H1 (cell line): ENCODE measurements at regions of chr16 and their contacts with region 1.

Region 1: GRCh38 chr16:4586291-4586690 is 28.4 kb downstream of the UBALD1 start:
- DNase-seq: no peak
- H3K4me3 ChIP-seq: no peak overlapping the region
- H3K27ac ChIP-seq: no peak overlapping the region
- H3K4me1 ChIP-seq: no peaks in the 10 kb centered on the region; a peak in 1 of 7 replicates
- H3K27me3 ChIP-seq: no peaks in the 10 kb centered on the region; a peak in 1 of 7 replicates
- CTCF ChIP-seq: no peak
- EP300 ChIP-seq: no peak
- POLR2A ChIP-seq: no peak
- RAD21 ChIP-seq: no peak

Region 2: GRCh38 chr16:4183237-4184036 is 402.9 kb before region 1 on chr16:
- CTCF ChIA-PET with region 1: no interaction called
- POLR2A ChIA-PET with region 1: no interaction called
- DNase-seq: peak; percentile 82 to 99
- H3K4me3 ChIP-seq: peak overlapping the region; percentile 63 to 86 (median 78)
- H3K27ac ChIP-seq: peak overlapping the region; percentile 77; the same call in 1 of the 2 replicates
- H3K4me1 ChIP-seq: peaks cover 0 to 3% (median 2%) of the 10 kb centered on the region in 4 experiments; a peak in 1 of 7 replicates
- H3K27me3 ChIP-seq: peaks cover 0 to 3% (median 0%) of the 10 kb centered on the region in 4 experiments; a peak in 1 of 7 replicates
- CTCF ChIP-seq: peak in 1 of 3 experiments; percentile 14; a peak in 1 of 4 replicates
- EP300 ChIP-seq: no peak
- POLR2A ChIP-seq: peak in 1 of 2 experiments; percentile 81; a peak in 2 of 3 replicates
- RAD21 ChIP-seq: no peak; a peak in 1 of 4 replicates

Region 3: GRCh38 chr16:4517812-4518680 is 68.2 kb before region 1 on chr16:
- CTCF ChIA-PET with region 1: interaction called, 157 read pairs
- POLR2A ChIA-PET with region 1: interaction called, 9 read pairs
- DNase-seq: peak in 1 of 2 experiments; percentile 79
- H3K4me3 ChIP-seq: no peak overlapping the region
- H3K27ac ChIP-seq: no peak overlapping the region; the same call in 1 of the 2 replicates
- H3K4me1 ChIP-seq: peaks cover 0 to 18% (median 13%) of the 10 kb centered on the region in 4 experiments; a peak in 6 of 7 replicates
- H3K27me3 ChIP-seq: no peaks in the 10 kb centered on the region
- CTCF ChIP-seq: peak; percentile 91 to 97 (median 94)
- EP300 ChIP-seq: no peak
- POLR2A ChIP-seq: 0 out of 3 replicates have a peak, but pooled peaks of 1 of the 2 experiments have one; percentile 27
- RAD21 ChIP-seq: peak; percentile 98 to 99

Region 4: GRCh38 chr16:4550591-4550990 is 35.7 kb before region 1 on chr16:
- CTCF ChIA-PET with region 1: interaction called, 23 read pairs
- POLR2A ChIA-PET with region 1: no interaction called
- DNase-seq: no peak
- H3K4me3 ChIP-seq: no peak overlapping the region
- H3K27ac ChIP-seq: no peak overlapping the region
- H3K4me1 ChIP-seq: peaks cover 0 to 3% (median under 1%) of the 10 kb centered on the region in 4 experiments; a peak in 1 of 7 replicates
- H3K27me3 ChIP-seq: no peaks in the 10 kb centered on the region
- CTCF ChIP-seq: no peak
- EP300 ChIP-seq: no peak
- POLR2A ChIP-seq: no peak
- RAD21 ChIP-seq: no peak

Region 5: DNA sequence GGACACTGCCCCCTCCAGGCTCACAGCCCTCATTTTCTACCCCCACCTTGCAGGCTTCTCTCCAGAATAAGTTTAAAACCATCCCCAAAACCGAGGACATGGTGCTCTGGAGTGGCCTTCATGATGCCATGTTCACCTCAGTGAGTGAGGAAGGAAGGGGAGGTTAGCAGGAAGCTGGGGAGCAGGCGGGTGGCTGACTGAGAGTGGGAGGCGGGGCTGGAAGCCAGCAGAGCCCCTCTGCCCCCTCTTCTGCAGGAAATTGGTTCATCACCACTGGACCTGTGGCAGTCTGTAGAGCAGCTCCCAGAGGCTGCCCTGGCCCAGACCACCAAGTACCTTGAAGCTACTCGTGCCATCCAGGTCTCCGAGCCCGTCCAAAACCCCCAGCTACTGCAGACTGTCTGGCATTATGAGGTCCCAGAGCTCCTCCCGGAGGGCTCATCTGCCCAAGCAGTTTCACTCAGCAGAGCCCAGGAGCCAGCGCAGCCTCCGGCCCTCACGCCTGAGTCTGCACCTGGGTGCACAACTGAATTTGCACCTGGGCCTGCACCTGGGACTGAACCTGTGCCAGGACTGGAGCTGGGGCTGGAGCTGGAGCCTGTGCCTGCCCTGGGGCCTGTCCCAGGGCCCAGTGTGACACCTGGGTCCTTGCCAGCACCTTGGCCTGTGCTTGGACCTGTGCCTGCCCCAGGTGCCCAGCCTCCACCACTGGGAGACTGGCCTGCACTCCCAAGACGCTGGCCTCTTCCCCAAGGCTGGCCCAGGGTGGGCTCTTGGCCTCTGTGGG is 11.2 kb before region 1 on chr16:
- CTCF ChIA-PET with region 1: interaction called, 39 read pairs
- POLR2A ChIA-PET with region 1: interaction called, 7 read pairs
- DNase-seq: peak; percentile 49 to 53
- H3K4me3 ChIP-seq: no peak overlapping the region
- H3K27ac ChIP-seq: no peak overlapping the region
- H3K4me1 ChIP-seq: peaks cover 7 to 11% (median 7%) of the 10 kb centered on the region in 4 experiments
- H3K27me3 ChIP-seq: no peaks in the 10 kb centered on the region
- CTCF ChIP-seq: peak; percentile 63 to 78 (median 70)
- EP300 ChIP-seq: no peak
- POLR2A ChIP-seq: no peak
- RAD21 ChIP-seq: peak; percentile 86 to 93

Region 6: GRCh38 chr16:4616047-4616811 is 29.9 kb after region 1 on chr16:
- CTCF ChIA-PET with region 1: interaction called, 13 read pairs
- POLR2A ChIA-PET with region 1: interaction called, 126 read pairs
- DNase-seq: peak; percentile 96 to 98
- H3K4me3 ChIP-seq: peak overlapping the region; percentile 35 to 62 (median 50)
- H3K27ac ChIP-seq: peak overlapping the region; percentile 98
- H3K4me1 ChIP-seq: peaks cover 0 to 48% (median 34%) of the 10 kb centered on the region in 4 experiments; a peak in 6 of 7 replicates
- H3K27me3 ChIP-seq: no peaks in the 10 kb centered on the region
- CTCF ChIP-seq: peak in 2 of 3 experiments; percentile 64 to 86; a peak in 3 of 4 replicates
- EP300 ChIP-seq: peak in 1 of 2 experiments; percentile 58; a peak in 1 of 3 replicates
- POLR2A ChIP-seq: peak in 1 of 2 experiments; percentile 61; a peak in 1 of 3 replicates
- RAD21 ChIP-seq: peak; percentile 24 to 49